Activated T-helper 2 cell treated with anti-CD3 and anti-CD28 coated beads, Interferon-gamma antibody, Interleukin-2, Interleukin-4, amounts not matched to agents 10 μg/mL and 5 μg/mL and 100 μg/mL, durations not matched to agents 14 hours and 24 hours and 36 hours (primary cell): ENCODE measurements at regions of chr6 and their contacts with region 1.

Region 1: GRCh38 chr6:110815217-110816109 is at the start of gene CDK19:
- DNase-seq: peak; percentile 98
- H3K4me3 Mint-ChIP-seq: peak within 1 kb of the TSS; percentile 100
- H3K27ac Mint-ChIP-seq: peak within 1 kb of the TSS; percentile 100
- H3K4me1 Mint-ChIP-seq: peaks cover 46% of the 10 kb centered on the region
- H3K27me3 Mint-ChIP-seq: no peaks in the 10 kb centered on the region
- total RNA-seq, gene CDK19: 19.0 and 22.6 TPM in 2 replicates

Region 2: DNA sequence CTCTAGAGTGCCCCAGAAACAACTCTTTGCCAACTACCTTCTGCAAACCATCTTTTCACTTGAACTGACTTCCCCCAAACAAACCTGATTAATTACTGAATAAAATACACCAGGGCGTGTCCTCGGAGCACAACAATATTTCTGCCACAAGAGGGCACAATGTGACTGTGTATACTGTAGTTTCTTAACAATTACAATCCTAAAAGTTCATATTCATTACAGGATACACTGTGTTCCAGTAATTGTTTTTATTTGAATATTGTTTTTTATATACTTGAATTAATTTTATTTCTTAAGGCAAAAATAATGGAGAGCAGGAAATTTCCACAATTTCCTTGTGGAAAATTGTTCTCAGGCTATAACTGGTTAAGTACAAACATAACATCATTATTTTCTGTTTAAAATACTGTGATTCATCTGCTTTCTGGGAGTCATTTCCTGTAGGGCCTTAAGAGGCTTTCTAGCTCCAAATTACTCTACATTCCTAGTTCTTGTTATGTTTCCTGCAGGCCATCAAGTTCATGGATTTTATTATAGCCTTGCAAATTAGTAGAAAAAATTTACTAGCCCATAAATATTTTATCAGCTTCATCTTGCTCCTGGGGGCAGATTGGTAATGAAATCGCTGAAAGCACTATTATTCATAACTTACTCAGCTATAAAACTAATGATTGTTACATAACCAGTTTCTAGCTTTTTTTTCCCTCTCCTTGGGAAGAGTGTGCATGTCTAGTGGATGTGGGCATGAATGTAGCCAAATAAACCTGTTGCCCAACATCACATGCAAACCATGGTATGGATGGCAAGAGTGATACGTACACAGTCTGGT is 287.1 kb before region 1 on chr6:
- intact Hi-C with region 1: loop called (anchors 2 kb)
- DNase-seq: peak; percentile 20
- H3K4me3 Mint-ChIP-seq: no peak overlapping the region
- H3K27ac Mint-ChIP-seq: no peak overlapping the region
- H3K4me1 Mint-ChIP-seq: peaks cover 40% of the 10 kb centered on the region
- H3K27me3 Mint-ChIP-seq: no peaks in the 10 kb centered on the region

Region 3: GRCh38 chr6:110589865-110590513 is 225.5 kb before region 1 on chr6:
- intact Hi-C with region 1: loop called (anchors 1 kb)
- DNase-seq: no peak
- H3K4me3 Mint-ChIP-seq: no peak overlapping the region
- H3K27ac Mint-ChIP-seq: peak overlapping the region; percentile 78
- H3K4me1 Mint-ChIP-seq: peaks cover 32% of the 10 kb centered on the region
- H3K27me3 Mint-ChIP-seq: peaks cover 4% of the 10 kb centered on the region

Region 4: DNA sequence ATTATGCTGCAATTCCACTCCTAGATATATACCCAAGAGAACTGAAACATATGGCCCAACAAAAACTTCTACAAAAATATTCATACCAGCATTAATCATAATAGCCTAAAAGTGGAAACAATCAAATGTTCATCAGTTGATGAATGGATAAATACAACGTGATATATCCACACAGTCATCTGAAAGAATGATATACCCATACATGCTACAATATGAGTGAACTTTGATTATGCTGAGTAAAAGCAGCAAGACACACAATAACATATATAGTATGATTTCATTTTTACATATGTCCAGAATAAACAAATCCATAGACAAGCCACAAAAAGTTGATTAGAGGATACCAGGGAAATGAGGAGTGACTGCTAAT is 30.9 kb before region 1 on chr6:
- intact Hi-C with region 1: loop called (anchors 2 kb)
- DNase-seq: no peak
- H3K4me3 Mint-ChIP-seq: no peak overlapping the region
- H3K27ac Mint-ChIP-seq: no peak overlapping the region
- H3K4me1 Mint-ChIP-seq: peaks cover 28% of the 10 kb centered on the region
- H3K27me3 Mint-ChIP-seq: no peaks in the 10 kb centered on the region

Region 5: GRCh38 chr6:110944681-110945151 is 129.3 kb after region 1 on chr6:
- intact Hi-C with region 1: loop called (anchors 1 kb)
- DNase-seq: peak; percentile 44
- H3K4me3 Mint-ChIP-seq: peak overlapping the region; percentile 10
- H3K27ac Mint-ChIP-seq: peak overlapping the region; percentile 83
- H3K4me1 Mint-ChIP-seq: peaks cover 11% of the 10 kb centered on the region
- H3K27me3 Mint-ChIP-seq: no peaks in the 10 kb centered on the region

Region 6: GRCh38 chr6:110981202-110981600 is 165.7 kb after region 1 on chr6:
- intact Hi-C with region 1: loop called (anchors 10 kb)
- DNase-seq: no peak
- H3K4me3 Mint-ChIP-seq: peak overlapping the region; percentile 97
- H3K27ac Mint-ChIP-seq: peak overlapping the region; percentile 98
- H3K4me1 Mint-ChIP-seq: peaks cover 30% of the 10 kb centered on the region
- H3K27me3 Mint-ChIP-seq: no peaks in the 10 kb centered on the region